CD8-positive, alpha-beta T cell (primary cell): ENCODE measurements at regions of chr2 and their contacts with region 1.

Region 1: DNA sequence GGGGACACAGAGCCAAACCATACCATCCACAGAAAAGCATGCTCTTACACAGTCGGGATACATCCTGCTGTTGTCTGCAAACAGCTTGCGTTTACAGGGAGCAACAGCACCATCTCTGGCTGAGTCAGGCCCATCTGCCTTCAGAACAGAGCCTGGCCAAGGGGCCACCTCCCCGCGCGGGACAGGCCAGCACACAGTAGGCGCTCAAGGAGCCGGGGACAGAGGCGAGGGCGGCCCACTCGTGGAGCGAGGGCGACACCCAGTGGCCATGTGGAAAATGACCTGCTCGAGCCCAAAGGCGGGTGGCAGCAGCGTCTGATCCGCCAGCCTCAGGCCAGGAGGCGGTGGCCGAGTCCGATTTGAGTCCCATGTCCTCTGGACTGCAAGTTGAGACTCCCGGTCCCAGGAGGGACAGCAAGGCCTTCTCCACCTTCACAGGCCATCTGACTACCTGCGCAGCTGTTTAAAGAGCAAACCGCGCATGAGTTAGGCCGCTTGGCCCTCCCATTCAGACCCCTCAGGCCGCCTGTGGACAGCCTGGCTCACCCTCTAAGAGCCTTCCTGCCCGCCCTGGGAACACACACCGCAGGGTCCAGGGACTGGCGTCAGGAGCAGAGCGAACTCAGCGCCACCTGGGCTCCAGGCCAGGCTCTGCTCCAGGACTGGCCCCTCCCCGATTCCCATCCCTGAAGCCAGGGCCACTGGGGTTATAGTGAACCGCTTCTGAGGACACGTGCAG is 38.3 kb downstream of the TTC32 start:
- DNase-seq: peak; percentile 51 to 84 (median 70)
- ATAC-seq: peak; percentile 91
- H3K4me3 ChIP-seq: peak overlapping the region in 1 of 2 experiments; percentile 28
- H3K4me3 Mint-ChIP-seq: no peak overlapping the region
- H3K27ac ChIP-seq: no peak overlapping the region
- H3K27ac Mint-ChIP-seq: no peak overlapping the region
- H3K4me1 ChIP-seq: peaks cover 10% of the 10 kb centered on the region
- H3K4me1 Mint-ChIP-seq: peaks cover 9% of the 10 kb centered on the region
- H3K27me3 ChIP-seq: peaks cover 0 to 3% of the 10 kb centered on the region in 2 experiments
- H3K27me3 Mint-ChIP-seq: peaks cover 2% of the 10 kb centered on the region
- CTCF ChIP-seq: peak; percentile 98

Region 2: GRCh38 chr2:18387441-18388206 is 1475.8 kb before region 1 on chr2:
- CTCF ChIA-PET with region 1: interaction called, 6 read pairs
- POLR2A ChIA-PET with region 1: no interaction called
- intact Hi-C with region 1: loop called (anchors 1 kb)
- DNase-seq: peak; percentile 19 to 70 (median 55)
- ATAC-seq: peak; percentile 38
- H3K4me3 ChIP-seq: no peak overlapping the region
- H3K4me3 Mint-ChIP-seq: no peak overlapping the region
- H3K27ac ChIP-seq: no peak overlapping the region
- H3K27ac Mint-ChIP-seq: no peak overlapping the region
- H3K4me1 ChIP-seq: no peaks in the 10 kb centered on the region
- H3K4me1 Mint-ChIP-seq: no peaks in the 10 kb centered on the region
- H3K27me3 ChIP-seq: no peaks in the 10 kb centered on the region
- H3K27me3 Mint-ChIP-seq: peaks cover 2% of the 10 kb centered on the region
- CTCF ChIP-seq: peak; percentile 81

Region 3: GRCh38 chr2:18435421-18436037 is 1427.9 kb before region 1 on chr2:
- CTCF ChIA-PET with region 1: no interaction called
- POLR2A ChIA-PET with region 1: no interaction called
- intact Hi-C with region 1: loop called in 1 of 2 experiments (anchors 2 kb)
- DNase-seq: peak in 3 of 9 experiments; percentile 6 to 39 (median 24)
- ATAC-seq: no peak
- H3K4me3 ChIP-seq: no peak overlapping the region
- H3K4me3 Mint-ChIP-seq: no peak overlapping the region
- H3K27ac ChIP-seq: no peak overlapping the region
- H3K27ac Mint-ChIP-seq: no peak overlapping the region
- H3K4me1 ChIP-seq: no peaks in the 10 kb centered on the region
- H3K4me1 Mint-ChIP-seq: no peaks in the 10 kb centered on the region
- H3K27me3 ChIP-seq: no peaks in the 10 kb centered on the region
- H3K27me3 Mint-ChIP-seq: peaks cover 6% of the 10 kb centered on the region
- CTCF ChIP-seq: peak; percentile 50

Region 4: GRCh38 chr2:18749912-18750526 is 1113.5 kb before region 1 on chr2:
- CTCF ChIA-PET with region 1: interaction called, 11 read pairs
- POLR2A ChIA-PET with region 1: no interaction called
- intact Hi-C with region 1: loop called (anchors 1 kb)
- DNase-seq: peak in 5 of 9 experiments; percentile 4 to 45 (median 24)
- ATAC-seq: no peak
- H3K4me3 ChIP-seq: no peak overlapping the region
- H3K4me3 Mint-ChIP-seq: no peak overlapping the region
- H3K27ac ChIP-seq: no peak overlapping the region
- H3K27ac Mint-ChIP-seq: no peak overlapping the region
- H3K4me1 ChIP-seq: no peaks in the 10 kb centered on the region
- H3K4me1 Mint-ChIP-seq: no peaks in the 10 kb centered on the region
- H3K27me3 ChIP-seq: no peaks in the 10 kb centered on the region
- H3K27me3 Mint-ChIP-seq: no peaks in the 10 kb centered on the region
- CTCF ChIP-seq: peak; percentile 37

Region 5: GRCh38 chr2:19874726-19875125 is 11.3 kb after region 1 on chr2:
- CTCF ChIA-PET with region 1: interaction called, 17 read pairs
- POLR2A ChIA-PET with region 1: no interaction called
- intact Hi-C with region 1: no loop called
- DNase-seq: peak in 1 of 9 experiments; percentile 29
- ATAC-seq: no peak
- H3K4me3 ChIP-seq: no peak overlapping the region
- H3K4me3 Mint-ChIP-seq: no peak overlapping the region
- H3K27ac ChIP-seq: no peak overlapping the region
- H3K27ac Mint-ChIP-seq: no peak overlapping the region
- H3K4me1 ChIP-seq: peaks cover 1% of the 10 kb centered on the region
- H3K4me1 Mint-ChIP-seq: peaks cover 26% of the 10 kb centered on the region
- H3K27me3 ChIP-seq: no peaks in the 10 kb centered on the region
- H3K27me3 Mint-ChIP-seq: no peaks in the 10 kb centered on the region
- CTCF ChIP-seq: no peak

Region 6: DNA sequence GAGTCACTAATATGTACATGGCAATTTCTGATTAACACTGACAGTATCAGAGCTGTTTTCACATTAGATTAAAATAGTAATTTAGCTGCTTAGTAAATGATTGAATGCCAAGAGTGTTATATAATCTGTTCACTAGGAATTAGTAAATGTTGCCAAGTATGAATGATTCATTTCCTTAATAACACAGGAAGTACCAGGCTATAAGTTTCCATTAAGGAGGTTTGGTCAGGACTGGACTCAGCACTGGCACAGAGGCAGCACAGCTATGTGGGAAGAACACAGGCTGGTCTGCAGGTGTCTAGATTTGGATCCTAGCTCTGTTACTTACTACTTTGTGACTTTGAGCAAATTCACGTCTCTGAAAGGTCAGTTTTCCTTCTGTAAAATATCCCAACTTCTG is 1357.5 kb after region 1 on chr2:
- CTCF ChIA-PET with region 1: no interaction called
- POLR2A ChIA-PET with region 1: no interaction called
- intact Hi-C with region 1: no loop called
- DNase-seq: no peak
- ATAC-seq: no peak
- H3K4me3 ChIP-seq: no peak overlapping the region
- H3K4me3 Mint-ChIP-seq: no peak overlapping the region
- H3K27ac ChIP-seq: no peak overlapping the region
- H3K27ac Mint-ChIP-seq: no peak overlapping the region
- H3K4me1 ChIP-seq: no peaks in the 10 kb centered on the region
- H3K4me1 Mint-ChIP-seq: no peaks in the 10 kb centered on the region
- H3K27me3 ChIP-seq: no peaks in the 10 kb centered on the region
- H3K27me3 Mint-ChIP-seq: no peaks in the 10 kb centered on the region
- CTCF ChIP-seq: no peak